ENCODE measurements at regions of chr4 and their contacts with region 1.

Region 1: GRCh38 chr4:107913281-107913899 is 18.0 kb upstream of the CYP2U1 start:
- DNase-seq: no peak
- ATAC-seq: peak; percentile 74 to 80
- H3K4me3 ChIP-seq: no peak overlapping the region
- H3K27ac ChIP-seq: no peak overlapping the region
- H3K4me1 ChIP-seq: no peaks in the 10 kb centered on the region
- H3K27me3 ChIP-seq: no peaks in the 10 kb centered on the region

Region 2: GRCh38 chr4:107757864-107758476 is 155.4 kb before region 1 on chr4:
- intact Hi-C with region 1: loop called (anchors 2 to 5 kb)
- DNase-seq: no peak
- ATAC-seq: no peak
- H3K4me3 ChIP-seq: no peak overlapping the region
- H3K27ac ChIP-seq: no peak overlapping the region
- H3K4me1 ChIP-seq: no peaks in the 10 kb centered on the region
- H3K27me3 ChIP-seq: no peaks in the 10 kb centered on the region

Region 3: DNA sequence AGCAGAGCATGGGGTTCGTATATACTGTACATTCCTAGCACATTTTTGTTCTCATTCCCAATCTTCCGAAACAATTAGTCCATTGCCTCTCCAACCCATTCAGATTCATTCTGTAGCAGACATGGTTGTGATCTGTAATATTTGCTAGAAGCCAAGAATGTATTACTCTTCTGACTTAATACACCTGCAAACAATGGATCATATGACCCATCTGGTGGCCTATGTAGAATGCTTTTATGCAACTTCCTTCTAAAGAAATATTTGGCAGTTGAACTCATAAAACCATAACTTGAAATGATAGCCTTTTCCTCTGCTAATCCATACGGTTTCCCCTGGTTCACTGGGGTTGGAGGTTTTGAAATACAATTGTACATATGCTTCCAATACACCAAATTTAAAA is 121.5 kb before region 1 on chr4:
- intact Hi-C with region 1: no loop called
- DNase-seq: no peak
- ATAC-seq: no peak
- H3K4me3 ChIP-seq: no peak overlapping the region
- H3K27ac ChIP-seq: no peak overlapping the region
- H3K4me1 ChIP-seq: no peaks in the 10 kb centered on the region
- H3K27me3 ChIP-seq: no peaks in the 10 kb centered on the region

Region 4: GRCh38 chr4:107818301-107818910 is 95.0 kb before region 1 on chr4:
- intact Hi-C with region 1: loop called in 2 of 4 experiments (anchors 10 kb)
- DNase-seq: no peak
- ATAC-seq: no peak
- H3K4me3 ChIP-seq: no peak overlapping the region
- H3K27ac ChIP-seq: no peak overlapping the region
- H3K4me1 ChIP-seq: no peaks in the 10 kb centered on the region
- H3K27me3 ChIP-seq: no peaks in the 10 kb centered on the region

Region 5: GRCh38 chr4:107824353-107825071 is 88.9 kb before region 1 on chr4 and contains the start of gene SGMS2:
- intact Hi-C with region 1: loop called in 2 of 4 experiments (anchors 10 kb)
- DNase-seq: peak; percentile 92
- ATAC-seq: peak; percentile 96 to 98
- H3K4me3 ChIP-seq: peak within 1 kb of the TSS; percentile 75
- H3K27ac ChIP-seq: peak within 1 kb of the TSS; percentile 91
- H3K4me1 ChIP-seq: no peaks in the 10 kb centered on the region
- H3K27me3 ChIP-seq: no peaks in the 10 kb centered on the region
- total RNA-seq, gene SGMS2: 20.5 to 35.5 (median 26.2) TPM

Region 6: GRCh38 chr4:107978716-107979451 is 65.5 kb after region 1 on chr4:
- intact Hi-C with region 1: no loop called
- DNase-seq: no peak
- ATAC-seq: peak in 1 of 2 donors; percentile 57
- H3K4me3 ChIP-seq: no peak overlapping the region
- H3K27ac ChIP-seq: no peak overlapping the region
- H3K4me1 ChIP-seq: no peaks in the 10 kb centered on the region
- H3K27me3 ChIP-seq: no peaks in the 10 kb centered on the region

Measured in right cardiac atrium (tissue), 5 donors.